Esophagus muscularis mucosa (tissue), 4 donors: ENCODE measurements at regions of chr6 and their contacts with region 1.

Region 1: GRCh38 chr6:158706096-158706982 is 56.5 kb downstream of the SYTL3 start:
- DNase-seq: no peak
- H3K4me3 ChIP-seq: peak overlapping the region in 1 of 4 donors; percentile 6
- H3K27ac ChIP-seq: peak overlapping the region; percentile 73 to 88 (median 82)
- H3K4me1 ChIP-seq: peaks cover 44 to 56% (median 54%) of the 10 kb centered on the region in 4 donors
- H3K27me3 ChIP-seq: no peaks in the 10 kb centered on the region
- CTCF ChIP-seq: peak; percentile 46 to 63 (median 54)
- EP300 ChIP-seq: no peak
- POLR2A ChIP-seq: no peak

Region 2: DNA sequence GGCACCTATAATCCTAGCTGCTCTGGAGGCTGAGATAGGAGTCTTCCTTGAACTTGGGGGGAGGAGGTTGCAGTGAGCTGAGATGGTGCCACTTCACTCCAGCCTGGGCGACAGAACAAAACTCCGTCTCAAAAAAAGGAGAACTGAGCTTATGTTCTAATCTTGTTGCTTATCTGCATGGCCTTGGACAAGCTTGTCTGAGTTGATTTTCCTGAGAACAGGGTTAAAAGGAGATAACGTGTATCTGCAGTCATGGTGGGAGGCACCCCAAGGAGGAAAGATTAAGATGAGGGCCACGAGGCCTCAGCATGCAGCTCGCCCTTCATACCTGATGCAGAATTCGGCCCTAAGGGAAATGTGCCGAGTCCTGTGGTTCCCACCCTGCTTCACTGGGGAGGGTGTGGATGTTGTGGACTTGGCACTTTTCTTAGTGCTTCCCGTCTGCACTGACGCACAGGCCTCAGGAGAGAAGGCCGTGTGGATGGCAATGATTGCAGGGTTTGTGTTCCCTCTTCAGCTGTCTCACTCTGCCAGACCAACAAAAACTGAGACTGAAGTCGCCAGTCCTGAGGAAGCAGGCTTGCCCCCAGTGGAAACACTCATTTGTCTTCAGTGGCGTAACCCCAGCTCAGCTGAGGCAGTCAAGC is 56.6 kb after region 1 on chr6:
- intact Hi-C with region 1: loop called (anchors 5 kb)
- DNase-seq: no peak
- H3K4me3 ChIP-seq: no peak overlapping the region
- H3K27ac ChIP-seq: peak overlapping the region; percentile 18 to 71 (median 49)
- H3K4me1 ChIP-seq: peaks cover 0 to 22% (median 18%) of the 10 kb centered on the region in 4 donors
- H3K27me3 ChIP-seq: no peaks in the 10 kb centered on the region
- CTCF ChIP-seq: no peak
- EP300 ChIP-seq: no peak
- POLR2A ChIP-seq: no peak

Region 3: GRCh38 chr6:158972241-158973233 is 266.2 kb after region 1 on chr6:
- intact Hi-C with region 1: loop called (anchors 1 kb)
- DNase-seq: no peak
- H3K4me3 ChIP-seq: no peak overlapping the region
- H3K27ac ChIP-seq: no peak overlapping the region
- H3K4me1 ChIP-seq: peaks cover 0 to 8% (median 4%) of the 10 kb centered on the region in 4 donors
- H3K27me3 ChIP-seq: no peaks in the 10 kb centered on the region
- CTCF ChIP-seq: peak; percentile 54 to 65 (median 58)
- EP300 ChIP-seq: no peak
- POLR2A ChIP-seq: no peak